Posterior cingulate gyrus (tissue), 11 donors: ENCODE measurements at regions of chr1 and their contacts with region 1.

Region 1: DNA sequence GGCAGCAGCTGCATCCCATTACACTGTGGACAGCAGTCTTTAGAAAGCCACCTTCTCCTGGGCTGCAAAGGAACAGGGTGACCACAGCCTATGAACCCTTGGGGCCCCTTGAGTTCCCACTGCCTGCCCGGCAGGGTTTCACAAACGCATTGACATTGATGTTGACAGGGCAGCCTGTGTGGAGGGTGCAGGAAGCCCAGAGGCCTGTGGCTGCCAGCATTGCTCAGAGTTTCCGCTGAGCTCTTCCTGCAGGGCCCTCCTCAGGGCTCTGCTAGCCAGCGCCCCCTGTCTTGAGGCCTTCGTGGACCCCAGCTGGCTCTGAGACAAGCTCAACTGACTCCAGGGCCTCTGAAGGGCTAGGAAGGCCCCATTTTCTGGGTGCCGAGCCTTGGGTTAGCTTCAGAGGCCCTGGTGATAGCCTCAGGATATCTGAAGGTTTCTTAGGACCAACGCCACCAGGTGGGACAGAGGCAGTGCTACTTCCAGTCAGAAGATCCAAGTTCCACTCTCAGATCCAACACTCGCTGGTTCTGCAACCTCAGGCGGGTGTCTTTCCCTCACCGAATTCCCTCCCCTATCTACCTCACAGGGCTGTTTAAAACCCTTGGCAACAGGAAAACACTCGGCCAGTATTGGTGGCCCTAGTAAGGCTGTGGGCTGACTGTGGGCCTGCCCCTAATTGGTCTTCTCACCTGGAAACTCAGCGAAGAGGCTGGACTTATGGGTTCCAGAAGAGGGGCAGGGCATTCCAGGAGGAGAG is 27.2 kb upstream of the EPS8L3 start:
- DNase-seq: peak in 5 of 10 donors; percentile 12 to 86 (median 26)

Region 2: GRCh38 chr1:109910123-109910962 is 119.4 kb after region 1 on chr1 and contains the start of gene CSF1:
- intact Hi-C with region 1: loop called (anchors 5 kb)
- DNase-seq: peak; percentile 57 to 95 (median 82)